ENCODE measurements at regions of chr3 and their contacts with region 1.

Region 1: DNA sequence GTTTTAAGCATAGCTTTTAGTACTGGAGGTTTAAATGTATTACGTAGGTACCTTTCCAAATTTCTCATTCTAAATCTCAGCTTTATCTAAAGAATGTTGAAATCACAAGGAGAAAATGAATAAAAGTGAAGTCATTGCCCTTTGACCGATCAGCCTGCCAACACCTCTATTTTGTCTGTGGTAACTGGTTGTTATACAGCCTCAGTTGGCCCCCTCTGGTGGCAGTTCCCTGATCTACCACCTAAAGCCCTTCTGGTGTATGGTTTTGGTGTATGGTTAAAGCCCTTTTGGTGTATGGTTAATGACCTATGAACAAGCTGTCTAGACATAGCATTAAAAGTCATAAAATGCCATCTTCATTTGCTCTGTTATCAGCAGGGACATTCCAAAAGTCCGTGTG is 378.2 kb upstream of the AZI2 start:
- DNase-seq: peak; percentile 41 to 62
- ATAC-seq: peak; percentile 65 to 95 (median 83)
- H3K4me3 ChIP-seq: no peak overlapping the region
- H3K27ac ChIP-seq: no peak overlapping the region
- H3K4me1 ChIP-seq: no peaks in the 10 kb centered on the region
- H3K27me3 ChIP-seq: no peaks in the 10 kb centered on the region
- CTCF ChIP-seq: peak; percentile 59

Region 2: GRCh38 chr3:28476194-28476593 is 250.6 kb before region 1 on chr3:
- intact Hi-C with region 1: loop called (anchors 5 kb)
- DNase-seq: no peak
- ATAC-seq: peak in 2 of 4 donors; percentile 55 to 74
- H3K4me3 ChIP-seq: no peak overlapping the region
- H3K27ac ChIP-seq: no peak overlapping the region
- H3K4me1 ChIP-seq: no peaks in the 10 kb centered on the region
- H3K27me3 ChIP-seq: no peaks in the 10 kb centered on the region
- CTCF ChIP-seq: peak; percentile 67

Region 3: DNA sequence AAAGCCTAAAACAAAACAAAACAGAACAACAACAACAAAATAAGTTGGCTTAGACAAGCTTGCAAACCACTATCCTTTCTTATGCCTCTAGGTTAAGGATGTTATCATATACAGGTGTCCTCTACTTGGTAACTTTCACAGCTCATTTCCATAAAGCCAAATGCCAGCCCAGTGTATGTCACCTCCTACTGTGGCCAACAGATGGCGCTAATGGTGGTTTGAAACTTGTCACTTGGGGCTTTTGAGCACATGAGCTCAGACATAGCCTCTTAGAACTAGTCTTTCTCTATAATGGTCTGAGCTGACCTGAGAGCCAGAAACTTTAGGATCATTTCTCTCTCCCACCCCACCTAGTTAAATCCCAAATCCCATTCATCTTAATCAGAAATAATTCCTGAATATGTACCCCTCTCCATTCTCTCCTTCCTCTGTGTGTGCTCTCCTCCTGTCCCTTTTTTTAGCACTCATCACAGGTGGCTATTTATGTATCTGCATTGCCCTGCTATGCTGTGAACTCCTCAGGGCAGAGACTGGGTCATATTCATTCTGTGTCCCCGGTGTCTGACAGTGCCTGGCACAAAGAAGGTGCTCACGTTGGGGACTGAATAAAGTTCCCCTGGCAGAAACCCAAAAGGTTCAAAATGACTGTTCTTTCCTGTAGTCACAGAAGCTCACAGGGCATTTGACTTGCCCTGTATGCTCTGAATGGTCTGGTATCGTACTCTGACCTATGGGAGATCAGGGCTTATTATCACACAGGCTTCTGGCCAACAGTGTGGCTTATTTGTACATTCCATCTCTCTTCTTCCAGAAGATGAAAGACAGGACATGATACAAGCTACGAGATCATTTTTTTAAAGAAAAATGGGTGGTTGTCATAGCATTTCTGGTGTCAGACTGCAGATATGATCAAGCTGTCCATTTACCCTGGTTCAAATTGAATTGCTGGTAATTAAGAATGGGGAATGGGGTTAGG is 58.9 kb before region 1 on chr3:
- intact Hi-C with region 1: loop called in 1 of 2 experiments (anchors 1 kb)
- DNase-seq: peak; percentile 47 to 62
- ATAC-seq: peak; percentile 90 to 97 (median 92)
- H3K4me3 ChIP-seq: peak overlapping the region; percentile 44
- H3K27ac ChIP-seq: peak overlapping the region; percentile 67
- H3K4me1 ChIP-seq: peaks cover 25% of the 10 kb centered on the region
- H3K27me3 ChIP-seq: no peaks in the 10 kb centered on the region
- CTCF ChIP-seq: peak; percentile 74

Region 4: DNA sequence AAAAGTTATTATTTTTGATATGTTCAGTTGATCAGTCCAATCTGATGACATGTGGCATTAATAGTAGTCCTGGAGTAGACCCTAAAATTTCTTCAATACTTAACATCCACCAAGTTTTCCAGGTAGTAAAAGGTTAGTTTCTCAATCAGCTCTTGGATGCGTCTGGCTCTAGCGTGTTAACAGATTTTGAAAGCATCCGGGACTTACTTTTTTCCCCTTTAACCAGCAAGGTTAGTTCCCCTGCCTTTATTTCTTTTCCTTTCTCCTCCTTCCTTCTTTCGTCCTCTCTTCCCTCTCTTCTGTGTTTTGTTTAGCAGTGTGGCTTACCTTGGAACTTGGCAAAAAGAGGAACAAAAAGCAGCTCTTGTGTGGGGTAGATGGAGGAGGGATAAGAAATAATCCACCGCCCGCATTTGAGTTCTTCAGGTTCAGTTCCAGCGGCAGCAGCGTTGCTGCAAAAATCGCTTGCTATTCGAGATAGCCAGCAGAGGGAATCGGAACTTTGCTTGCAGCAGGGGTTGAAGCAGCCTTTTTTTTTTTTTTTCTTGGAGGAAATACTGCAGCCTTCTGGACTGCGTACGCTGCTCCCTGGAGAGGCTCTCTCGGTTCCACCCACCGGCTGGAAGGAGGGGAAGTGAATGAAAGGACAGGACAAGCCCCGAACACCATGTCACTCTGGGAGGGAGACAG is 553.7 kb after region 1 on chr3 and contains the start of gene RBMS3:
- intact Hi-C with region 1: no loop called
- DNase-seq: peak; percentile 85 to 92
- ATAC-seq: peak; percentile 78 to 82 (median 80)
- H3K4me3 ChIP-seq: peak within 1 kb of the TSS; percentile 76
- H3K27ac ChIP-seq: peak within 1 kb of the TSS; percentile 93
- H3K4me1 ChIP-seq: peaks cover 8% of the 10 kb centered on the region
- H3K27me3 ChIP-seq: no peaks in the 10 kb centered on the region
- CTCF ChIP-seq: peak; percentile 50
- total RNA-seq, gene RBMS3: 23.5 to 34.5 (median 29.7) TPM